Activated T-helper 1 cell treated with anti-CD3 and anti-CD28 coated beads, Interleukin-12 subunit alpha, Interleukin-12 subunit beta, Interleukin-2, Interleukin-4 antibody, amounts not matched to agents 30 ng/mL and 10 ng/mL and 1 ng/mL, durations not matched to agents 14 hours and 24 hours and 36 hours (primary cell): ENCODE measurements at regions of chr11 and their contacts with region 1.

Region 1: DNA sequence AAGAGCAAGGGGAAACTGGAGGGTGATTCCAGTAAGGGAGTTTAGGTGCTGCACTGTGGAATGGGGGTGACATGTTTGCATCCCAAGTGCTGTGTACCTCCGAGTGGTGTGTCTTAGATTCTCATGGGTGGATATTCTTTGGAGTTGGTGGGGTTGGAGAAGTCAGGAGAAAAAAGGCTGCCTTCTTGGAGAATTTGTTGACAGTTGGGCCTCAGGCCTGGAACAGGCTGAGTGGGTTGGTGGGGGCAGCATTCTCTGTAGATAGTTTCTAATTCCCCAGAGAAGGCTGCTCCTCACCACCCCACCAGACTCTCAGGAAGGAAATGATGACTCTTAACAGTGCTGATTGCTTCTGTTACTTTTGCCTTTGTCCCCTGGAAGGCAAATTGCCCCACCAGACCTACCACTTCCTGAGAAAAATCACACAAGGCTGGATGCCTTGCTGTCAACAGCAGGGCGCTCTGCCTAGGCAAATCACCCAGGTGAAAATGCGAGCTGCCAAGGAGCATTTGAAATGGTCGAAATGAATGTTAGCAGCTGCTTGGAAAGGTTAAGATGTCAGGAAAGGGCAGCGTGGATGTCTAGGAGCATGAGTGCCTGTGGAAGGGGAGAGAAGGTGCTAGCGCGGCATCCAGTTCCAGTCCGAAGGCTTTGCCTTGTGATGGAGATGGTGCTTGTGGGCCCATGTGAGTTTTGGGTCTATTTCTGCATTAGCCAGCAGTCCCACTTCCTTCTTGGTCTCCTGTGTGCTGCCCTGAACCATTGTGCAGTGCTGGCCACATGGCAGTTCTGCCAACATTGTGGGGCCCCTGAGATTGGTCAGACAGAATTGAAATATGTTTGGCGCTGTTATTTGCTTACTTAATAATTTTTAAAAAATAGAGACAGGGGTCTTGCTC is 29.7 kb upstream of the SORL1-AS1 start:
- DNase-seq: peak; percentile 53
- H3K4me3 Mint-ChIP-seq: peak overlapping the region; percentile 76
- H3K27ac Mint-ChIP-seq: peak overlapping the region; percentile 96
- H3K4me1 Mint-ChIP-seq: peaks cover 36% of the 10 kb centered on the region
- H3K27me3 Mint-ChIP-seq: no peaks in the 10 kb centered on the region

Region 2: DNA sequence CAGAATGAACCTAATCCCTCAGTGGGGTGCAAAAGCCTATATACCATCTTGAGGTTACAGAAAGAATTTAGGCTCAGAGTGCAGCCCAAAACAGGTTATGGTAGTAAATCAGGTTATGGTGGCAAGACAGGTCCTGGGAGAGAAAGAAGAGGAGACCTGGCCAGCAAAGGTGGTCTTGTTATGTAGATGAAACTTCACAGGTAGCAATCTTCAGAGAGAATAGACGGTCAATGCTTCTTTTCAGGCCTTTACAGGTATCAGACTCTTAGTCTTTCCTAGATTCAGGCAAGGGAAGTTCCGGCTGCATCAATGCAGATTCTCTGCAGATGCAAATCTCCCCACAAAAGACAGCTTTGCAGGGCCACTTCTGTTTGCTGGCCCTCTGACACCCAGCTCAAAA is 76.2 kb before region 1 on chr11:
- intact Hi-C with region 1: no loop called
- DNase-seq: no peak
- H3K4me3 Mint-ChIP-seq: no peak overlapping the region
- H3K27ac Mint-ChIP-seq: no peak overlapping the region
- H3K4me1 Mint-ChIP-seq: no peaks in the 10 kb centered on the region
- H3K27me3 Mint-ChIP-seq: no peaks in the 10 kb centered on the region

Region 3: GRCh38 chr11:121418625-121419114 is 63.8 kb before region 1 on chr11:
- intact Hi-C with region 1: no loop called
- DNase-seq: peak; percentile 33
- H3K4me3 Mint-ChIP-seq: no peak overlapping the region
- H3K27ac Mint-ChIP-seq: peak overlapping the region; percentile 8
- H3K4me1 Mint-ChIP-seq: peaks cover 70% of the 10 kb centered on the region
- H3K27me3 Mint-ChIP-seq: no peaks in the 10 kb centered on the region

Region 4: GRCh38 chr11:121431820-121432526 is 50.5 kb before region 1 on chr11:
- intact Hi-C with region 1: loop called (anchors 1 kb)
- DNase-seq: no peak
- H3K4me3 Mint-ChIP-seq: no peak overlapping the region
- H3K27ac Mint-ChIP-seq: peak overlapping the region; percentile 36
- H3K4me1 Mint-ChIP-seq: peaks cover 27% of the 10 kb centered on the region
- H3K27me3 Mint-ChIP-seq: peaks cover 3% of the 10 kb centered on the region

Region 5: DNA sequence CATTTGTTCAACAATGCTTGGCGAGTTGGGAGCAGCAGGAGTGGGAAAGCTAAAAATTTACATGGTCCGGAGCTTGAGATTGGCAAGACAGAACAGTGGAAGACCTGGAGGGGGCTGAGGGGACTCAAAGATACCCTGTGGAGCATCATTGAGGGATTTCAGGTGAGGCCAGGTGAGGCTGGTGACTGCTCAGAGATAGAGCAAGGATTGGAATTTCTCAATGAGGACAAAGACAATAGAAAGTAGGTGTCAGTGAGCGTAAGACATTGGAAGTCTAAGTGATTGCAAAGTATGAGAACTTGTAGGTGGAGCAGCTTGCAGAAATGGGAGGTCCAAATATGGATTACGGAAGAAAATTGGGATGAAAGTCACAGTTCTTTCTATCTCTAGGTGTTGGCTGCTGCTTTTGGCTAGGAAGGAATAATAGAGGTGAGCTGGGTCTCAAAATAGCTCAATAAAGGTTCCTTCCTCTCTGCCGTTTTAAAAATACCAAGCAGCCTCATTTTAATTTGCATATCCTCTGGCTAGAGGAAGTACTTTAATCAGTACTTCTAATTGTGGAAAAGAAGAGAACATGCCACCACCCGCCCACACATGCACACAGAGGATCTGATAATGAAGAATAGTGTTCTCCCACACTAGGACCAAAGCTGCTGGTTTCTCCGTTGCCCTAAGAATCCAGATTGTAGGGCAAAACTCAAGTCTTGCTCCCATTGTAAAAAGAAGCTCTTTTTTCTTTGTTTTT is 12.0 kb after region 1 on chr11:
- intact Hi-C with region 1: loop called (anchors 1 kb)
- DNase-seq: no peak
- H3K4me3 Mint-ChIP-seq: peak overlapping the region; percentile 39
- H3K27ac Mint-ChIP-seq: peak overlapping the region; percentile 66
- H3K4me1 Mint-ChIP-seq: peaks cover 31% of the 10 kb centered on the region
- H3K27me3 Mint-ChIP-seq: no peaks in the 10 kb centered on the region

Region 6: DNA sequence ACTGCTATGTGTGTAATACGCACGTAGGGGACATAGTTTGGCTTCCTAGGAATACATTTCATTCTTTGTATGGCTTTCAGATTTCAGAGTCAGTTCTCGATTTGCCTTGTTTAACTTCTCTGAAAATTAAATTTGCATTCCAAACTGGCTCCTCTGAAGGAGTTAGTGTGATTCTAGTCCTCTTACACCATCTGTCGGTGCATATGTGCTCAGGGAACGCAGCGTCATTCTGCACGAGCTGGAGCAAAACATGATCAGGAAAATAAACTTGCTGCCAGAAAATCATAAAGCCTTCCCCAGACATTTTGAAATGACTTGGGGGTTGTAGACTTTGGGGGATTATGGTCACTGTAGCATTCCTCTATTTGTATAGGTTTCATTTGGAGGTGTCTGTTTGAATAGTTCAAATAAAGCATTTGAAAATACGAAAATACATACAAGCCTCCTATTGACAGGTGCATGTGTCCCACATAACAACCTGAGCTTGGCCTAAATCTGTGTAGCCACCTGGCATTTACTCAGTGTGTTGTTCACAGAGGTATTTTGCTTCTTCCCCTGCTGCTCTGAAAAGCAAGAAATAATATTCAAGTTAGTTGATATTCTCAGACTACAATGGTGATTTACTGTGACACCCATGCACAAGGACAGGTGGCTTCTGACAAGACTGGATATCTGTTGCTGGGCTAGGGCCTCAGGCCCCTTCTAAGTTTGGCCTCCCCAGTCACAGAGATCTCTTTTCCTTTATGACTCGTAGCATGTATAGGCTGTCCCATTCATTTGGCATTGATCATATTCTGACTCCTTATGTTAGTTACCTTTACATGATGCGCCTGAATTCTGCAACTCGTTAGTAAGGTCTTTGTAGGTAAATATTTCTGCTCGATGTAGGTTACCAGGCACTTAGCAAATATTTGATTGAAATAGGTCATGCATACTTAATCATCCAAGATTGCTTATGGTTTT is 51.9 kb after region 1 on chr11:
- intact Hi-C with region 1: loop called (anchors 5 kb)
- DNase-seq: no peak
- H3K4me3 Mint-ChIP-seq: no peak overlapping the region
- H3K27ac Mint-ChIP-seq: no peak overlapping the region
- H3K4me1 Mint-ChIP-seq: peaks cover 22% of the 10 kb centered on the region
- H3K27me3 Mint-ChIP-seq: no peaks in the 10 kb centered on the region

Region 7: GRCh38 chr11:121829159-121829643 is 346.7 kb after region 1 on chr11:
- intact Hi-C with region 1: no loop called
- DNase-seq: no peak
- H3K4me3 Mint-ChIP-seq: no peak overlapping the region
- H3K27ac Mint-ChIP-seq: no peak overlapping the region
- H3K4me1 Mint-ChIP-seq: no peaks in the 10 kb centered on the region
- H3K27me3 Mint-ChIP-seq: no peaks in the 10 kb centered on the region